Thyroid gland (tissue), 4 donors: ENCODE measurements at regions of chr4 and their contacts with region 1.

Region 1: GRCh38 chr4:109433205-109434006 is at the start of gene SEC24B:
- DNase-seq: peak; percentile 91 to 92
- H3K4me3 ChIP-seq: peak within 1 kb of the TSS; percentile 49 to 70 (median 55)
- H3K27ac ChIP-seq: peak within 1 kb of the TSS; percentile 86 to 95 (median 86)
- H3K4me1 ChIP-seq: peaks cover 21 to 30% of the 10 kb centered on the region in 2 donors
- H3K27me3 ChIP-seq: no peaks in the 10 kb centered on the region
- CTCF ChIP-seq: peak in 5 of 6 experiments; percentile 23 to 95 (median 92)
- POLR2A ChIP-seq: peak in 1 of 2 donors; percentile 89
- total RNA-seq, gene SEC24B: 39.5 to 49.1 (median 42.6) TPM

Region 2: GRCh38 chr4:109559983-109560686 is 126.7 kb after region 1 on chr4 and contains the start of gene MCUB:
- intact Hi-C with region 1: loop called (anchors 10 kb)
- DNase-seq: peak; percentile 75 to 80
- H3K4me3 ChIP-seq: peak within 1 kb of the TSS; percentile 43 to 69 (median 63)
- H3K27ac ChIP-seq: peak within 1 kb of the TSS; percentile 4 to 82 (median 41)
- H3K4me1 ChIP-seq: peaks cover 5 to 8% of the 10 kb centered on the region in 2 donors
- H3K27me3 ChIP-seq: no peaks in the 10 kb centered on the region
- CTCF ChIP-seq: no peak
- POLR2A ChIP-seq: peak in 1 of 2 donors; percentile 39
- total RNA-seq, gene MCUB: 6.5 to 18.5 (median 12.4) TPM

Region 3: DNA sequence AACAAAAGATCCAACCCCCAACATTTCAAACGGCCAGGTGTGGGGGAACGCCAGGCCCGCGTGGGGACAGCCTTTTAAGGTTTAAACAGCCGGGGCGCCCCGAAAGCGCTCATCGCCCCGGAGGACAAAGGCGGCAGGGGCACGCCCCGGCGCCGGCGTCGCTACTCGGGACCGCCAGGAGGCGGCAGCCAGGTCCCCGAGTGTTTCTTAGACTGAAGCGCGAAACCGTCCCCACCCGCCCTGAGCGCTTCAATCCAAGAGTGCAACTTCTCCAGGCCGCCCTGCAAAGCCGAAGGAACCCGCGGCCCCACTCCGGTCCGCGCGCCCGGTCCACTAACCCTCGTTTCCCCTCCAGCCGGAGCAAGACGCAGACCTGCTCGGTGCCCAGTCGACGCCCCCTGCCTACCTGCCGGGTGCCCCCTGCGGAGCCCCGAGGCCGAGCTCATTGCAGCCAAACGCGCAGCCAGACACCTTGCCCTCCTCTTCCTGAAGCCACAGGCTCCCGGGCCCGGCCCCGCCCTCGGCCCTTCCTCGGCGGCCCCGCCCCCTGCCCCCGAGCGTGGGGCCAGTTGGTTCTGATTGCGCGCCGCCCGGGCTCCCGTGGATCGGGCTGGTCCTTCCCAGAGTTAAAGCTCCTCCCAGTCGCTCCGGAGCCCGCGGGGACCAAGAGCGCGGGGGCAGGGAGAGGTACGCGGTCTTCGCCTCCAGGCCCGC is 269.7 kb after region 1 on chr4 and contains the start of gene CASP6:
- intact Hi-C with region 1: loop called (anchors 10 kb)
- DNase-seq: peak; percentile 94 to 95
- H3K4me3 ChIP-seq: peak within 1 kb of the TSS; percentile 19 to 61 (median 35)
- H3K27ac ChIP-seq: peak within 1 kb of the TSS; percentile 42 to 83 (median 83)
- H3K4me1 ChIP-seq: peaks cover 14% of the 10 kb centered on the region in 2 donors
- H3K27me3 ChIP-seq: no peaks in the 10 kb centered on the region
- CTCF ChIP-seq: peak; percentile 44 to 79 (median 61)
- POLR2A ChIP-seq: peak in 1 of 2 donors; percentile 82
- total RNA-seq, gene CASP6: 16.2 to 25.6 (median 20.5) TPM

Region 4: DNA sequence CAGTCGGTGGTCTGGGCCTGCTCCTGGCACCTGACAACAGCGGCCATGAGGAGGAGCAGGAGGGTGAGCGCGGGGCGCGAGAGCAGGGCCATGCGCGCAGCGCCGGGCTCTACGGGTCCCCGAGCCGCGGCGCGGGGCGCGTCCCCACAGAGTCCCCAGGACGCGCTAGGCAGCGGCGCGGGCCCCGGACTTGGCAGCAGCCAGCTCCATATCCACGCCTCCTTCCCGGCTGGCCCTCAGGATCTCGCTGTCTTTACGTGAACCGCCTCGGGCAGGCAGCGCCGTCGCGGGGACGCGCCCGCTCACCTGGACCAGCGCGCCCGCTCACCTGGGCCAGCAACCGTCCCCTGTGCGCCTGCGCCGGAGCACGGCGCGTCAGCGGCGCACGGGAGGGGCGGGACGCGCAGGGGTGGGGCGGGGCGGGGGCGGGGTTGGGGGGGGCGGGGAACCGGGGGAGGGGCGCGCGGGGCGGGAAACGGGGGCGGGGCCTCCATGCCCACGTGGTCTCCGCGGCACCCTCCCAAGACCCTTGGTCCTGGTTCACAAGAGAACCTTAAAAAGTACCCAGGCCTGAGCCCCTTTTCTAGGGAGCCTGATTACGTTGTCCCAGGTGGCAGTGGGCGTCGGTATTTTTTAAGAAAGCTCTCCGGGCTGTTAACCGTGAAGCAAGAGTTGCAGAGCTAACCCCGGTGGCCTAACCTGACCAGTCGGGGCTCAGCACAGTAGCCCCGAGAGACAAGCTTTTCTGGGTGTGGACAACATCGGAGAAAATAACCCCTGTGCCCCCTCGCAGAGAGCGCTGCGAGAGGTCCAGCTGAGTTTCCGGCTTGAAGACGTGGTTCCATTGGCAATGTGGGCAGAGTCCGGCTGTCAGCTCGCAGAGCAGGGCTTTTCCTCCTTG is 296.6 kb after region 1 on chr4 and contains the start of gene PLA2G12A:
- intact Hi-C with region 1: loop called (anchors 10 kb)
- DNase-seq: peak; percentile 93 to 95
- H3K4me3 ChIP-seq: peak within 1 kb of the TSS; percentile 47 to 85 (median 73)
- H3K27ac ChIP-seq: peak within 1 kb of the TSS; percentile 31 to 83 (median 83)
- H3K4me1 ChIP-seq: no peaks in the 10 kb centered on the region
- H3K27me3 ChIP-seq: no peaks in the 10 kb centered on the region
- CTCF ChIP-seq: no peak
- POLR2A ChIP-seq: peak; percentile 45 to 95
- total RNA-seq, gene PLA2G12A: 37.9 to 216 (median 55.5) TPM

Region 5: GRCh38 chr4:109809655-109810054 is 376.2 kb after region 1 on chr4:
- intact Hi-C with region 1: loop called (anchors 5 kb)
- DNase-seq: no peak
- H3K4me3 ChIP-seq: no peak overlapping the region
- H3K27ac ChIP-seq: no peak overlapping the region
- H3K4me1 ChIP-seq: peaks cover 3% of the 10 kb centered on the region in 2 donors
- H3K27me3 ChIP-seq: no peaks in the 10 kb centered on the region
- CTCF ChIP-seq: no peak
- POLR2A ChIP-seq: no peak